Activated CD4-positive, alpha-beta T cell treated with anti-CD3 and anti-CD28 coated beads for 36 hours (primary cell): ENCODE measurements at regions of chrX and their contacts with region 1.

Region 1: GRCh38 chrX:9677098-9677739 is 88.4 kb downstream of the GPR143 start:
- DNase-seq: peak; percentile 34
- ATAC-seq: peak; percentile 99
- H3K4me3 Mint-ChIP-seq: no peak overlapping the region
- H3K27ac Mint-ChIP-seq: peak overlapping the region; percentile 19
- H3K4me1 Mint-ChIP-seq: peaks cover 22% of the 10 kb centered on the region
- H3K27me3 Mint-ChIP-seq: no peaks in the 10 kb centered on the region

Region 2: DNA sequence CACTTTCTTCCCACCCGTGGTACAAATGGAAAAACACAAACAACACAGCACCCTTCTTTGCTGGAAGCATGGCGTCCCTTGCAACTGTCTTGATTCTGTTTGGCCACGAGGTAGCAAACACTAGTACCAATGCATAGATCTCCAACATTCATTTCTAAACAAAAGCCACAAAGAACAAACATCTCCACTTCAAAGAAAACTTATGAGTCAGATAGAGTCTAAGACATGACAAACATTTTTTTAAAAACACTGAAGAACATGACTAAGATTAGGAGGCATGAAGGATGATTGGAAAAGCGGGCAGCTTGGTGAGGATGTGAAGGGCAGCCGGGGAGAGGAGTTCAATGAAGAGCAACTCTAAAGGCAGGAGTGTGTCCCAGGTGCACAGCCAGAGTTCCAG is 445.7 kb before region 1 on chrX:
- CTCF ChIA-PET with region 1: no interaction called
- POLR2A ChIA-PET with region 1: no interaction called
- intact Hi-C with region 1: loop called in 1 of 2 experiments (anchors 1 kb)
- DNase-seq: peak; percentile 4
- ATAC-seq: peak; percentile 49
- H3K4me3 Mint-ChIP-seq: no peak overlapping the region
- H3K27ac Mint-ChIP-seq: no peak overlapping the region
- H3K4me1 Mint-ChIP-seq: peaks cover 6% of the 10 kb centered on the region
- H3K27me3 Mint-ChIP-seq: no peaks in the 10 kb centered on the region

Region 3: DNA sequence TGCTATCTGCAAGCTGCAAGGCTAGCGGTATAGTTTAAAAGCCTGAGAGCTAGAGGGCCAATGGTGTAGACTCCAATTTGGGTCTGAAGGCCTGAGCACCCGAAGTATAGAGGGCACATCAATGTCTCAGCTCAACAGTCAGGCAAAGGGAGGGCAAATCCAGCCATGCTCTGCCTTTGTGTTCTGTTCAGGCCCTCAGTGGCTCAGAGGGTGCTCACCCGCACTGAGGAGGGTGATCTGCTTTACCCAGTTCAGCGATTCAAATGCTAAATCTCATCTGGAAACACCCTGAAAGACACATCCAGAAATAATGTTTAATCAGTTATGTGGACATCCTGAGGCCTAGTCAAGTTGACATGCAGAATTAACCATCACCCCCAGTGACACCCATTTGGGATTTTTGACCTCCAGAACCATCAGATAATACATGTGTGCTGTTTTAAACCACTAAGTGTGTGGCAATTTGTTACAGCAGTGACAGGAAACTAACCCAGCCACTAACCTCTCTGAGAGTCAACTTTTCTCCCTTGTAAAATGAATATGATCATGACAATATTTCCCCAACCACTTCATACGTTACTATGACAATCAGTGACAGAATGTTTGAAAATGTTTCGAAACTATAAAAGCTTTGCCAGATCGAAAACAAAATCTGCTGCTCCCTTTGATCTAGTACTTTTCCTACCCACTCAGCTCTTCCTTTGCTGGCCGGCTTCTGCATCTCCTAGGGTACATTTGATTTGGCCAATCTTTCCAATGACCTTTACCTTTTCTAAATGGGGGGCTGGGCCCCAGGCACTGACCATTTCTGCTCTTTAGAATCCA is 220.8 kb before region 1 on chrX:
- CTCF ChIA-PET with region 1: no interaction called
- POLR2A ChIA-PET with region 1: no interaction called
- intact Hi-C with region 1: loop called in 1 of 2 experiments (anchors 1 kb)
- DNase-seq: peak; percentile 49
- ATAC-seq: peak; percentile 89
- H3K4me3 Mint-ChIP-seq: peak overlapping the region; percentile 39
- H3K27ac Mint-ChIP-seq: peak overlapping the region; percentile 80
- H3K4me1 Mint-ChIP-seq: peaks cover 37% of the 10 kb centered on the region
- H3K27me3 Mint-ChIP-seq: no peaks in the 10 kb centered on the region

Region 4: DNA sequence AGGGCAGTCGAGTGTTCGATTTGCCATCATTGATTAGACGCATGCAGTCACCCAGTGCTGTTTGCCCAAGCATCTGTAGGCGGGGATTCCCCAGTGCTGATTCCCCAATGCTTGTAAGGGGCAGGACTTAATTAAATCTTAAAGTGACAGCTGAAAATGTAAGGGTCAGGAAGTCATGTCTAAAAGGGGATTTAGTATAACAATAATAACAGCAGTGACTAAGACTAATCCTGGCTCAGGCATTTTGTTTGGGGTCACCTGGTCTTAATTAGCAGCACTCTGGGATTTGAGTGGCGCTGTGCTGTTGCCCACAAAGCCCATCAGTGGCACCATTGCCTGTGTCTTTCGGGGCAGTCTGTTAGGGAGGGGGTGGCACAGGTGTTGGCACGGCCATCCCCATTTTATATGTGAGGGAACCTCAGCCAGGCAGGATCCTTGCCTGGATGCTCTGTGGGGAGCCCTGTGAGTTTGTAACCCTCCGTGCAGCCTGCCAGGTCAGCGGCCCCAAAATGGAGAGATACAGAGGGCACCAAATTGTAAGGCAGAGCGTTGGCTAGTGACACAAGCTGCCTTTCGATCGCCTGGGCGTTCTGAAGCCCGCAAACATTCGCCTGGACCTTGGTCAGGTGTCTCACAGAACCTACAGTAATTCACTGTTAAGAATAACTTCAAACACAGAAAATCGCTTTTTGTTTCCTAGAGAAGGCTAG is 65.6 kb before region 1 on chrX:
- CTCF ChIA-PET with region 1: no interaction called
- POLR2A ChIA-PET with region 1: no interaction called
- intact Hi-C with region 1: loop called in 1 of 2 experiments (anchors 10 kb)
- DNase-seq: no peak
- ATAC-seq: no peak
- H3K4me3 Mint-ChIP-seq: no peak overlapping the region
- H3K27ac Mint-ChIP-seq: no peak overlapping the region
- H3K4me1 Mint-ChIP-seq: no peaks in the 10 kb centered on the region
- H3K27me3 Mint-ChIP-seq: no peaks in the 10 kb centered on the region

Region 5: GRCh38 chrX:9724713-9725112 is 47.5 kb after region 1 on chrX:
- CTCF ChIA-PET with region 1: no interaction called
- POLR2A ChIA-PET with region 1: no interaction called
- intact Hi-C with region 1: no loop called
- DNase-seq: no peak
- ATAC-seq: no peak
- H3K4me3 Mint-ChIP-seq: no peak overlapping the region
- H3K27ac Mint-ChIP-seq: no peak overlapping the region
- H3K4me1 Mint-ChIP-seq: no peaks in the 10 kb centered on the region
- H3K27me3 Mint-ChIP-seq: no peaks in the 10 kb centered on the region

Region 6: GRCh38 chrX:9829308-9830267 is 152.4 kb after region 1 on chrX:
- CTCF ChIA-PET with region 1: no interaction called
- POLR2A ChIA-PET with region 1: no interaction called
- intact Hi-C with region 1: loop called in 1 of 2 experiments (anchors 1 kb)
- DNase-seq: peak; percentile 65
- ATAC-seq: peak; percentile 95
- H3K4me3 Mint-ChIP-seq: no peak overlapping the region
- H3K27ac Mint-ChIP-seq: no peak overlapping the region
- H3K4me1 Mint-ChIP-seq: peaks cover 7% of the 10 kb centered on the region
- H3K27me3 Mint-ChIP-seq: peaks cover 33% of the 10 kb centered on the region

Region 7: GRCh38 chrX:9942086-9942485 is 264.9 kb after region 1 on chrX:
- CTCF ChIA-PET with region 1: no interaction called
- POLR2A ChIA-PET with region 1: no interaction called
- intact Hi-C with region 1: loop called in 1 of 2 experiments (anchors 1 kb)
- DNase-seq: peak; percentile 80
- ATAC-seq: peak; percentile 90
- H3K4me3 Mint-ChIP-seq: peak overlapping the region; percentile 35
- H3K27ac Mint-ChIP-seq: peak overlapping the region; percentile 51
- H3K4me1 Mint-ChIP-seq: peaks cover 14% of the 10 kb centered on the region
- H3K27me3 Mint-ChIP-seq: peaks cover 21% of the 10 kb centered on the region